GM12878 (cell line): ENCODE measurements at regions of chr17 and their contacts with region 1.

Region 1: DNA sequence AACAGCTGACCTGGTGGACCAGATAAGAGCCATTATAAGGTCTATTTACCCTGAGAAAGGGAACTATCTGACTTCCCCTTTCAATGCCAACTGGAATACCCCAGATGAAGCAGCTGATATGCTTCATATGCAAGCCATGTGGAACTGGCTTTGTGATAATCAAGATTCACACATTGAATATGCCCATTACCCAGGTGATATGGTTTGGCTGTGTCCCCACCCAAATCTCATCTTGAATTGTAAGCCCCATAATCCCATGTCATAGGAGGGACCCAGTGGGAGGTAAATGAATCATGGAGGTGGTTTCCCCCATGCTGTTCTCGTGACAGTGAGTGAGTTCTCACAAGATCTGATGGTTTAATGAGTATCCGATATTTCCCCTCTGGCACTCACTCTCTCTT is 42.1 kb downstream of the IKZF3 start:
- DNase-seq: no peak
- ATAC-seq: peak; percentile 25
- H3K4me3 ChIP-seq: no peak overlapping the region
- H3K27ac ChIP-seq: peak overlapping the region; percentile 65
- H3K4me1 ChIP-seq: peaks cover 42% of the 10 kb centered on the region
- H3K27me3 ChIP-seq: no peaks in the 10 kb centered on the region
- CTCF ChIP-seq: no peak
- EP300 ChIP-seq: no peak
- POLR2A ChIP-seq: no peak
- RAD21 ChIP-seq: no peak

Region 2: GRCh38 chr17:39808409-39808997 is 13.5 kb before region 1 on chr17:
- CTCF ChIA-PET with region 1: interaction called, 6 read pairs
- POLR2A ChIA-PET with region 1: interaction called, 4 read pairs
- RAD21 ChIA-PET with region 1: interaction called, 5 read pairs
- SMC1A ChIA-PET with region 1: interaction called, 35 read pairs
- in situ Hi-C with region 1: no loop called
- intact Hi-C with region 1: no loop called
- DNase-seq: no peak
- ATAC-seq: peak; percentile 52
- H3K4me3 ChIP-seq: no peak overlapping the region
- H3K27ac ChIP-seq: peak overlapping the region; percentile 12; the same call in 1 of the 2 replicates
- H3K4me1 ChIP-seq: peaks cover 9% of the 10 kb centered on the region; the same call in 1 of the 2 replicates
- H3K27me3 ChIP-seq: no peaks in the 10 kb centered on the region
- CTCF ChIP-seq: no peak
- EP300 ChIP-seq: no peak
- POLR2A ChIP-seq: no peak
- RAD21 ChIP-seq: no peak

Region 3: DNA sequence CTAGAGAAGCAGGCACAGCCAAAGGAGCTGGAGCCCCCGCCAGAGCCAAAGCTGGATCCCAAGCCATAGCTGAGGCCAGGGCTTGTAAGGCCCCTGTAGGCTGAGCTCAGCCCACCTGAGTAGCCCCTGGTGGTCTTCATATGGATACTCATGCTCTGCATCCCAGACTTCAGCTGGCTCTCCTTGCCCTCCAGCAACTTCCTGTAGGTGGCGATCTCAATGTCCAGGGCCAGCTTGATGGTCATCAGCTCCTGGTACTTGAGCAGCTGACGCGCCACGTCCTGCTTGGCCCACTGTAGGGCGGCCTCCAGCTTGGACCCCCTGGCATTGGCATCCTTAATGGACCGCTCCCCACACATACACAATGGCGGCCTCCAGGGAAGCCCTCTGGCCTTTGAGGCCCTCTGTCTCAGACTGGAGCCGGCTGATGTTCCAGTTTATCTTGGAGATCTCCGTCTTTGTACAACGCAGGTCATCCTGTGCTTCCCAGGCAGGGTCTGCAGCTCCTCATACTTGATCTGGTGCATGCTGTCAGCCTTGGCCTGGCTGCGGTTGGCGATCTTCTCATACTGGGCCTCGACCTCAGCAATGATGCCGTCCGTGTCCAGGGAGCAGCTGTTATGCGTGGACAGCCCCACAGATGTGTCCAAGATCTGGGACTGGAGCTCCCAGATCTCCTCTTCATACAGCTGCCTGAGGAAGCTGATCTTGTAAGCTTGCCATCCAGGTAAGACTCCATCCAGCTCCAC is 13.2 kb after region 1 on chr17:
- CTCF ChIA-PET with region 1: interaction called, 11 read pairs
- POLR2A ChIA-PET with region 1: interaction called, 7 read pairs
- RAD21 ChIA-PET with region 1: interaction called, 5 read pairs
- SMC1A ChIA-PET with region 1: interaction called, 7 read pairs
- in situ Hi-C with region 1: no loop called
- intact Hi-C with region 1: no loop called
- DNase-seq: no peak
- ATAC-seq: peak; percentile 28
- H3K4me3 ChIP-seq: no peak overlapping the region
- H3K27ac ChIP-seq: no peak overlapping the region
- H3K4me1 ChIP-seq: no peaks in the 10 kb centered on the region; the same call in 1 of the 2 replicates
- H3K27me3 ChIP-seq: no peaks in the 10 kb centered on the region
- CTCF ChIP-seq: no peak
- EP300 ChIP-seq: no peak
- POLR2A ChIP-seq: peak; percentile 45
- RAD21 ChIP-seq: no peak